ENCODE measurements at regions of chr2 and their contacts with region 1.

Region 1: DNA sequence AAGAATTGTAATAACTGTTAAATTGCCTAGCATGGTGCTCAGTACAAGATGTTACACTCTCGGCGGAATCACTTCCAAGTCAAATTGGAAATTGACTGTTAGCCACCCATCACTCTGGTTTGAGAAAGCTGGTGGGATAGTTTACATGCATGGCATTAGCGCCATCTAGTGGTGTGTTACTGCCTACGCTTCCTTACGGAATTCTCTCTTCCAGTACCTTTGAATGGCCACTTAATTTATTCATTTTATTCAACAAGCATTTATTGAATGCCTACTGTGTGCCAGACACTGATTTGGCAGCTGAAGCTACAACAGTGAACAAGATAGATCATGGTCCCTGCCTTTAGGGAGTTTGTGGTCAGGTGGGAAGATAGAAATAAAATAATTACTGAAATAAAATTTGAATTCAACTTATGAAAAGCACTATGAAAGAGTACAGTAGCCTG is 171.2 kb downstream of the TMEM247 start:
- DNase-seq: peak; percentile 54
- H3K4me3 Mint-ChIP-seq: no peak overlapping the region
- H3K27ac Mint-ChIP-seq: no peak overlapping the region
- H3K4me1 Mint-ChIP-seq: no peaks in the 10 kb centered on the region
- H3K27me3 Mint-ChIP-seq: peaks cover 20% of the 10 kb centered on the region

Region 2: DNA sequence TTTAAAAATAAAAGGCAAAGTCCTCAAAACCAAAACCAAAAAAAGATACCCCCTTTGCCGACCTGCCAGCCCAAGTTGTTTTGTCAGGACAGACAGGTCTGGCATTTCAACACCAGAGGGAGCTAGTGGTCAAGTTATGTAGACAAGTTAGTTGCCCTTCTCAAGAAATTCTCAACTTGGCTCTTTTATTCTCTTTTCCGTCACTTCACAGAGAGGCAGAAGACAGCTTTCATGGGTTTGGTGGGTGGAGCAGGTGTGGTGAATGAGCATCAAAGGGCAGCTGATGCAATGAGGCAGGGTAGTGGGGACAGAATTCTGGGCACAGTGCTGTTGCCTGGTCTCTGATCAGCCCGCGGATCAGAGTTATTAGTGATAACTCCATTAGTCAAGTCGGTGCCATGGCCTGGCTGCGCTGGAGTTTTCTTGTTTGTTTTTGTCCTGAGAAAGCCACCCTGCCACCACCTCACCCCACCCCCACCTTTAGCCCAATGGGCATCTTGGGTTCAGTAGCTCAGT is 657.0 kb before region 1 on chr2:
- intact Hi-C with region 1: loop called (anchors 1 kb)
- DNase-seq: peak; percentile 44
- H3K4me3 Mint-ChIP-seq: no peak overlapping the region
- H3K27ac Mint-ChIP-seq: no peak overlapping the region
- H3K4me1 Mint-ChIP-seq: peaks cover 5% of the 10 kb centered on the region
- H3K27me3 Mint-ChIP-seq: peaks cover 3% of the 10 kb centered on the region

Region 3: GRCh38 chr2:46010925-46011490 is 639.6 kb before region 1 on chr2:
- intact Hi-C with region 1: loop called (anchors 1 kb)
- DNase-seq: no peak
- H3K4me3 Mint-ChIP-seq: no peak overlapping the region
- H3K27ac Mint-ChIP-seq: no peak overlapping the region
- H3K4me1 Mint-ChIP-seq: peaks cover 13% of the 10 kb centered on the region
- H3K27me3 Mint-ChIP-seq: no peaks in the 10 kb centered on the region

Region 4: GRCh38 chr2:46062637-46063412 is 587.8 kb before region 1 on chr2:
- intact Hi-C with region 1: loop called (anchors 1 kb)
- DNase-seq: peak; percentile 46
- H3K4me3 Mint-ChIP-seq: no peak overlapping the region
- H3K27ac Mint-ChIP-seq: no peak overlapping the region
- H3K4me1 Mint-ChIP-seq: peaks cover 18% of the 10 kb centered on the region
- H3K27me3 Mint-ChIP-seq: no peaks in the 10 kb centered on the region

Region 5: GRCh38 chr2:46601328-46601963 is 49.1 kb before region 1 on chr2:
- intact Hi-C with region 1: loop called (anchors 1 kb)
- DNase-seq: no peak
- H3K4me3 Mint-ChIP-seq: no peak overlapping the region
- H3K27ac Mint-ChIP-seq: no peak overlapping the region
- H3K4me1 Mint-ChIP-seq: no peaks in the 10 kb centered on the region
- H3K27me3 Mint-ChIP-seq: no peaks in the 10 kb centered on the region

Region 6: GRCh38 chr2:46632349-46632748 is 18.2 kb before region 1 on chr2:
- intact Hi-C with region 1: loop called (anchors 1 kb)
- DNase-seq: no peak
- H3K4me3 Mint-ChIP-seq: no peak overlapping the region
- H3K27ac Mint-ChIP-seq: no peak overlapping the region
- H3K4me1 Mint-ChIP-seq: peaks cover 8% of the 10 kb centered on the region
- H3K27me3 Mint-ChIP-seq: no peaks in the 10 kb centered on the region

Region 7: GRCh38 chr2:46887028-46887885 is 236.7 kb after region 1 on chr2:
- intact Hi-C with region 1: loop called (anchors 1 kb)
- DNase-seq: no peak
- H3K4me3 Mint-ChIP-seq: no peak overlapping the region
- H3K27ac Mint-ChIP-seq: no peak overlapping the region
- H3K4me1 Mint-ChIP-seq: peaks cover 10% of the 10 kb centered on the region
- H3K27me3 Mint-ChIP-seq: peaks cover 16% of the 10 kb centered on the region

Measured in activated T-helper 1 cell treated with anti-CD3 and anti-CD28 coated beads, Interleukin-12 subunit alpha, Interleukin-12 subunit beta, Interleukin-2, Interleukin-4 antibody, amounts not matched to agents 30 ng/mL and 10 ng/mL and 1 ng/mL, durations not matched to agents 14 hours and 24 hours and 36 hours (primary cell).